CD8-positive, alpha-beta T cell (primary cell): ENCODE measurements at regions of chr21 and their contacts with region 1.

Region 1: GRCh38 chr21:22871692-22872091 is 1873.5 kb downstream of the NCAM2 start:
- DNase-seq: no peak
- ATAC-seq: no peak
- H3K4me3 ChIP-seq: no peak overlapping the region
- H3K4me3 Mint-ChIP-seq: no peak overlapping the region
- H3K27ac ChIP-seq: no peak overlapping the region
- H3K27ac Mint-ChIP-seq: no peak overlapping the region
- H3K4me1 ChIP-seq: no peaks in the 10 kb centered on the region
- H3K4me1 Mint-ChIP-seq: no peaks in the 10 kb centered on the region
- H3K27me3 ChIP-seq: no peaks in the 10 kb centered on the region
- H3K27me3 Mint-ChIP-seq: no peaks in the 10 kb centered on the region
- CTCF ChIP-seq: no peak

Region 2: DNA sequence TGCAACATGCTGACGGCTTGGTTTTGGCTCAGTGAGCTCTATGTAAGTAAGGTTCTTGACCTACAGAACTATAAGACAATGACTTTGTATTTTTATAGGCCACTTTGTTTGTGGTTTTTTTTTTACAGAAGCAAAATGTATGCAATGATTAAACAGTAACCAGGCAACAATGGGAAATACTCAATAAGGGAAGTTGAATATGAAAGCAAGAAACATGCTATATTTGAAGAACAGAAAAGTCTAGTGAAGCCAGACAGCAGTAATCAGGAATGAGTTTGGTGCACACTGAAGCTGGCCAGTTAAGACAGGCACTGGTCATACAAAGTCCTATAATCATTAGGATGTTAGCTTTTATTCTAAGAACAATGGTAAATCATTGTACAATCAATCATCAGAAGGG is 53.3 kb after region 1 on chr21:
- CTCF ChIA-PET with region 1: no interaction called
- POLR2A ChIA-PET with region 1: no interaction called
- intact Hi-C with region 1: no loop called
- DNase-seq: no peak
- ATAC-seq: no peak
- H3K4me3 ChIP-seq: no peak overlapping the region
- H3K4me3 Mint-ChIP-seq: no peak overlapping the region
- H3K27ac ChIP-seq: no peak overlapping the region
- H3K27ac Mint-ChIP-seq: no peak overlapping the region
- H3K4me1 ChIP-seq: no peaks in the 10 kb centered on the region
- H3K4me1 Mint-ChIP-seq: no peaks in the 10 kb centered on the region
- H3K27me3 ChIP-seq: no peaks in the 10 kb centered on the region
- H3K27me3 Mint-ChIP-seq: no peaks in the 10 kb centered on the region
- CTCF ChIP-seq: no peak

Region 3: DNA sequence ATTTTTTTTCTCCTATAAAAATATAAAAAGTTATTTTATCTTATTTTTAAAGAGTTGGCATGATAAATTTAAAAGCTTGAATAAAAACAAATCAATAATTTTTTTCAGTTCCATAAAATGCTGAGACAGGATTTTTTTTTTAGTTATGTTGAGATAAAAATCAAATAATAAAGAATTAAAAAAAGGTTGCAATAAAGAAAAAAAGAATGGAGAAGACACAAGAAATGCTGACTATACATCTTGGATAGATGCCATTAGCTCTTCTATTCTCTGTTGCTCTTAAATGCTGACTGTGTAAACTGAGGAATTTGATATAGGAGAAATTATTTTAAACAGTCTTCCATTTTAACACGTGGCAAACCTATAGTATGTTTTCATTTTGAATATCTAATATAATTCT is 437.0 kb after region 1 on chr21:
- CTCF ChIA-PET with region 1: no interaction called
- POLR2A ChIA-PET with region 1: no interaction called
- intact Hi-C with region 1: no loop called
- DNase-seq: no peak
- ATAC-seq: no peak
- H3K4me3 ChIP-seq: no peak overlapping the region
- H3K4me3 Mint-ChIP-seq: no peak overlapping the region
- H3K27ac ChIP-seq: no peak overlapping the region
- H3K27ac Mint-ChIP-seq: no peak overlapping the region
- H3K4me1 ChIP-seq: no peaks in the 10 kb centered on the region
- H3K4me1 Mint-ChIP-seq: no peaks in the 10 kb centered on the region
- H3K27me3 ChIP-seq: no peaks in the 10 kb centered on the region
- H3K27me3 Mint-ChIP-seq: no peaks in the 10 kb centered on the region
- CTCF ChIP-seq: no peak

Region 4: DNA sequence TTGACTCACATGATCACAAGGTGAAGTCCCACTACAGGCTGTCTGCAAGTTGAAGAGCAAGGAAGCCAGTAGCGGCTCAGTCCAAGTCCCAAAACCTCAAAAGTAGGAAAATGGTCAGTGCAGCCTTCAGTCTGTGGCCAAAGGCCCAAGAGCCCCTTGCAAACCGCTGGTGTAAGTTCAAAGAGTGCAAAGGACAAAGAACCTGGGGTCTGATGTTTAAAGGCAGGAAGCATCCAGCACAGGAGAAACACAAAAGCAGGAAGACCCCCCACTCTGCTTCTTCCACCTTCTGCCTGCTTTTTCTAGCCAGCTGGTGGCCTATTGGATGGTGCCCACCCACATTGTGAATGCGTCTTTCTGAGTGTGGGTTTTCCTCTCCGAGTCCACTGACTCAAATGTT is 513.0 kb after region 1 on chr21:
- CTCF ChIA-PET with region 1: no interaction called
- POLR2A ChIA-PET with region 1: no interaction called
- intact Hi-C with region 1: loop called in 1 of 2 experiments (anchors 5 kb)
- DNase-seq: no peak
- ATAC-seq: no peak
- H3K4me3 ChIP-seq: no peak overlapping the region
- H3K4me3 Mint-ChIP-seq: no peak overlapping the region
- H3K27ac ChIP-seq: no peak overlapping the region
- H3K27ac Mint-ChIP-seq: no peak overlapping the region
- H3K4me1 ChIP-seq: no peaks in the 10 kb centered on the region
- H3K4me1 Mint-ChIP-seq: no peaks in the 10 kb centered on the region
- H3K27me3 ChIP-seq: no peaks in the 10 kb centered on the region
- H3K27me3 Mint-ChIP-seq: no peaks in the 10 kb centered on the region
- CTCF ChIP-seq: no peak